ENCODE measurements at regions of chr3 and their contacts with region 1.

Region 1: DNA sequence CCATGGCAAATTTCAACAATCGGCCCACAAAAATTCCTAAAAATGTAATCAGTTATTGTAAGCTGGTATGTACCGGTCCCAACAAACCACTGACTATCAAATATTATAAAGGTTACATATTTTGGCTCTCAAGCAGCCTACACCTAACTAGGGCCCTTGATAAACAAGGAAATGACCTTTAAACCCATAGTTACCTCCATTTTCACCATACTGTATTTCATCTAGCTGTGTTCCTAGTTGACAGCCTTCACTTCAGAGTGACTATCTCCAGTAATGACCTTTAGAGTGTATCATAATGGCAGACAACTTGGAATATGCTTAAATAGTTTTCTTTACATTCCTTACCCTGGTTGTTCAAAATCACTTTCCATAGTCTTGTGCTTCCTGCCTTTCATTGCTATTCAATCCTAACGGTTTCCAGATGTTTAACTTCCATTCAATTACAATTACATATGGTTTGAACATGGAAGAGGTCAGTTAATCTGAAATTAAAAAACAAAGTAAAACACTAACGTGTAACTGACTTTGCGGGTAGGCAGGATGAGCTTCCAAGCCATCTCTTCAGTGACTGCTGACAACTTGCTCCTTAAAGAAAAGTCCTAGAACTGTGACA is 111.9 kb upstream of the TSC22D2 start:
- DNase-seq: no peak
- H3K4me3 Mint-ChIP-seq: no peak overlapping the region
- H3K27ac Mint-ChIP-seq: no peak overlapping the region
- H3K4me1 Mint-ChIP-seq: peaks cover 11% of the 10 kb centered on the region
- H3K27me3 Mint-ChIP-seq: no peaks in the 10 kb centered on the region
- CTCF ChIP-seq: no peak

Region 2: GRCh38 chr3:150238998-150239619 is 57.1 kb before region 1 on chr3:
- CTCF ChIA-PET with region 1: interaction called, 17 read pairs
- POLR2A ChIA-PET with region 1: interaction called, 3 read pairs
- intact Hi-C with region 1: no loop called
- DNase-seq: peak; percentile 60
- H3K4me3 Mint-ChIP-seq: no peak overlapping the region
- H3K27ac Mint-ChIP-seq: peak overlapping the region; percentile 83
- H3K4me1 Mint-ChIP-seq: peaks cover 27% of the 10 kb centered on the region
- H3K27me3 Mint-ChIP-seq: no peaks in the 10 kb centered on the region
- CTCF ChIP-seq: peak; percentile 32

Measured in MCF 10A (cell line).